ENCODE measurements at regions of chr21 and their contacts with region 1.

Region 1: GRCh38 chr21:24895885-24896734 is 711.2 kb downstream of the MRPL39 start:
- DNase-seq: peak; percentile 1
- H3K4me3 ChIP-seq: no peak overlapping the region
- H3K27ac ChIP-seq: peak overlapping the region; percentile 5 to 33; a peak in 2 of 4 replicates
- H3K4me1 ChIP-seq: peaks cover 0 to 3% of the 10 kb centered on the region in 2 experiments; a peak in 2 of 4 replicates
- H3K27me3 ChIP-seq: no peaks in the 10 kb centered on the region
- CTCF ChIP-seq: peak; percentile 70
- EP300 ChIP-seq: no peak
- RAD21 ChIP-seq: peak; percentile 90

Region 2: GRCh38 chr21:24395320-24395923 is 500.7 kb before region 1 on chr21:
- CTCF ChIA-PET with region 1: no interaction called
- POLR2A ChIA-PET with region 1: no interaction called
- DNase-seq: no peak
- H3K4me3 ChIP-seq: no peak overlapping the region
- H3K27ac ChIP-seq: no peak overlapping the region
- H3K4me1 ChIP-seq: no peaks in the 10 kb centered on the region
- H3K27me3 ChIP-seq: no peaks in the 10 kb centered on the region
- CTCF ChIP-seq: no peak
- EP300 ChIP-seq: no peak
- RAD21 ChIP-seq: no peak

Region 3: DNA sequence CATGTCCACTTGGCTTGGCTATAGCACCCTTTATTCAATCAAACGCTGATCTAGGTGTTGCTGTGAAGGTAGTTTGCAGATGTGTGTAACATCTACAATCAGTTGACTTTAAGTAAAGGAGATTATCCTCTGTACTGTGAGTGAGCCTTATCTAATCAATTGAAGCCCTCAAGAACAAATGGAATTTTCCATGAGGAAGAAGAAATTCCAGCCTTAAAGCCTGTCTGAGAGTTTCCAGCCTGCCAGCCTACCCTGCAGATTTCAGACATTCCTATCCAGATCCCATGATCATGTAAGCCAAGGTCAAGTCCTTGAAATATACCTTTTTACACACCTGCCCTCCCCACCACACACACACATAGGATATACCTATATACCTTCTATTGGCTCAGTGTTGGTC is 14.5 kb after region 1 on chr21:
- CTCF ChIA-PET with region 1: no interaction called
- POLR2A ChIA-PET with region 1: no interaction called
- DNase-seq: no peak
- H3K4me3 ChIP-seq: no peak overlapping the region
- H3K27ac ChIP-seq: no peak overlapping the region
- H3K4me1 ChIP-seq: no peaks in the 10 kb centered on the region
- H3K27me3 ChIP-seq: no peaks in the 10 kb centered on the region
- CTCF ChIP-seq: no peak
- EP300 ChIP-seq: no peak
- RAD21 ChIP-seq: no peak

Region 4: DNA sequence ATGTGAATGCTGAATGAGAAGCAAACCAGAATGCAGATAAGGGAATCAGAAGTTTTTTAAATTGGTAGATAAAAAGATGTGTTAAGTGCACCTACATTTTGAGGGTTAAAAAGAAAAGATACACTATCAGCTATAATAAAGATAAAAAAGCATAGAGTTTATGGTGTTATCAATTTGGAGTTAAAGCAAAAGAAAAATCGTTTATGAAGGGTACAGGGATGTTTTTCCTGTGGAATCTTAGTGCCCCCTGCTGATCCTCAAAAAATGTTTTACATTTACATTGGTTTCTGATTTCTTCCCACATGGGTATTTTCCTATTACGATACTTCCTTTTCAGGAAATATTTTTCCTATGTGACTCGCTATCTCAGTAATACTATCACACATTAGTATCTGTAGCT is 417.7 kb after region 1 on chr21:
- CTCF ChIA-PET with region 1: interaction called, 17 read pairs
- POLR2A ChIA-PET with region 1: no interaction called
- DNase-seq: peak; percentile 23
- H3K4me3 ChIP-seq: peak overlapping the region in 1 of 2 experiments; percentile 13; a peak in 1 of 4 replicates
- H3K27ac ChIP-seq: peak overlapping the region in 1 of 2 experiments; percentile 86; a peak in 3 of 4 replicates
- H3K4me1 ChIP-seq: peaks cover 0 to 10% of the 10 kb centered on the region in 2 experiments; a peak in 3 of 4 replicates
- H3K27me3 ChIP-seq: no peaks in the 10 kb centered on the region
- CTCF ChIP-seq: peak; percentile 74
- EP300 ChIP-seq: peak in 1 of 2 experiments; percentile 39; a peak in 1 of 4 replicates
- RAD21 ChIP-seq: peak; percentile 91